Right ventricle myocardium inferior (tissue), 1 donor: ENCODE measurements at regions of chr6 and their contacts with region 1.

Region 1: GRCh38 chr6:45916692-45917091 is 99.0 kb downstream of the CLIC5 start:
- DNase-seq: no peak
- ATAC-seq: peak; percentile 68

Region 2: GRCh38 chr6:45377554-45378333 is 538.9 kb before region 1 on chr6 and contains the start of gene SUPT3H:
- intact Hi-C with region 1: loop called (anchors 10 kb)
- DNase-seq: peak; percentile 97
- ATAC-seq: peak; percentile 99
- total RNA-seq, gene SUPT3H: 3.2 TPM

Region 3: DNA sequence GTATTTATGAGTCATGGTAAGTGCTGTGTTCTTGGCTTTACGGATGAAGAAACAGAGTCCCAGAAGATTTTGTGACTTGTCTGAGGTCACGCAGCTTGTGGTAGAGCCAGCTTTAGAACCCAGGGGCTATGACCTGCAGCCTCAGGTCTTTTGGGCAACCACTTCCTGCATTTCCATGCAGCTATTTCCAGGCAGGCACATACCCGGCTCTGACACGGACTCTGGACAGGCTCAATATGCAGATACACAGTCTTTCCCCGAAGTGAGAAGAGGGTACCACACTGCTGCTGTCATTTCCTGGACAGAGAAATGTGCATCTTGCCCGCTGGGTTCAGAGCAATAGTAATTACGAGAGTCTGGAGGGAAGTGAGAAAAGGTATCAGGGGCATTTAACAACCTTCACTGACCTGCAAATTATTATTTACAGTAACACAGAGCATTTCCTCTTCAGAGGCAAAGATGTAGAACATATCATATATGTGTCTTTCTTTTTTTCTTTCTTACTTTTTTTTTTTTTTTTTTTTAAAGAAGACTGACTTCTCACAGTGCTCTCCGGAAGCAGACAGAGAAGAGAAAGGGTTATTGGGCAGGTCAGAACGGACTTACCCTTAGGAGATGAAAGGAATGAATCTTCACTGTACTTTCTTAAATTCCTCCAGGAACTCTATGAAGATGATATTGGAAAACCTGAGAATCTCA is 86.1 kb before region 1 on chr6:
- intact Hi-C with region 1: loop called (anchors 10 kb)
- DNase-seq: no peak
- ATAC-seq: no peak

Region 4: DNA sequence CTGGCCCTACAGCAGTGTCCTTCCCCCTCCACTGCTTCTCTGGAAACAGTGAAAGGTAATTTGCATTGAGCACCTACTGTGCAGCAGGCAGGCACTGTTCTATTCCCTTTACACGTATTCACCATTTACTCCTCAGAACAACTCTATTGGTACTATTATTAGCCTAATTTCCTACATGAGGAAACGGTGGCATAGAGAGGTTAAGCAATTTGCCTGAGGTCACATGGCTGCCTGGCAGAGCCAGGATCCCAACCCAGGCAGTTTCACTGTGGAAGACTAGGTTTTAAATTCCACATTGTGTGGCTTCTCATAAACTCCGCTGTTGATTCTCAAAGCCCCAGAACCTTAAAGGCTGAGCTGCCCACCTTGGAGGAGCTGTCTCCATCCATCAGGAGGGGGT is 26.3 kb after region 1 on chr6:
- intact Hi-C with region 1: no loop called
- DNase-seq: no peak
- ATAC-seq: no peak

Region 5: DNA sequence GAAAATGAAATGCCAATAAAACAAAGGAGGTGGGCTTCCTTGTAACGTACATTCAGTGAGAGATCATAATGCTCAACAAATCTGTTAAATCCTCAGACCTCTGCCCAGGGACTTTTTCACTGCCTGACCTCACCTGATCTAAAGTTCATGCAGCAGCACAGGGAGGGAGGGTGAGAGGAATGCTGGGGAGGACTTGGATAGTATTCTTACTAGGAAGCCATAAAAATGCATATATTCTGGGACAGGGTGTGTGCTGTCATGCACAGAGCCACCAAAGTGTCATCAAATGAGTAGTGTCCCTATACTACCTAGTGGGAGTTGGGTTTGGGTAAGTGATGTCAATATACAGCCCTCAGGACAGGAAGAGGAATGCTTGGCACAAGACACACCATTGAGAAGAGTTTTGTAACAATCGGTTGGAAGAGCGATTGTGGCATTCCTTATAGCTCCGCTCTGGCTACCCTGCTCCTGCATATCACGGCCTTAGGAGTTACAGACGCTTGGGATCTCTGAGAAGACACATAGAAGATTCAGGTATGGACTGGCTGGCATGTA is 66.4 kb after region 1 on chr6:
- intact Hi-C with region 1: no loop called
- DNase-seq: no peak
- ATAC-seq: no peak